ENCODE measurements at regions of chr21 and their contacts with region 1.

Region 1: GRCh38 chr21:42784276-42784675 is 95.1 kb downstream of the WDR4 start:
- DNase-seq: no peak
- H3K4me3 Mint-ChIP-seq: peak overlapping the region; percentile 69
- H3K27ac Mint-ChIP-seq: peak overlapping the region; percentile 96
- H3K4me1 Mint-ChIP-seq: peaks cover 47% of the 10 kb centered on the region
- H3K27me3 Mint-ChIP-seq: peaks cover 32% of the 10 kb centered on the region

Region 2: DNA sequence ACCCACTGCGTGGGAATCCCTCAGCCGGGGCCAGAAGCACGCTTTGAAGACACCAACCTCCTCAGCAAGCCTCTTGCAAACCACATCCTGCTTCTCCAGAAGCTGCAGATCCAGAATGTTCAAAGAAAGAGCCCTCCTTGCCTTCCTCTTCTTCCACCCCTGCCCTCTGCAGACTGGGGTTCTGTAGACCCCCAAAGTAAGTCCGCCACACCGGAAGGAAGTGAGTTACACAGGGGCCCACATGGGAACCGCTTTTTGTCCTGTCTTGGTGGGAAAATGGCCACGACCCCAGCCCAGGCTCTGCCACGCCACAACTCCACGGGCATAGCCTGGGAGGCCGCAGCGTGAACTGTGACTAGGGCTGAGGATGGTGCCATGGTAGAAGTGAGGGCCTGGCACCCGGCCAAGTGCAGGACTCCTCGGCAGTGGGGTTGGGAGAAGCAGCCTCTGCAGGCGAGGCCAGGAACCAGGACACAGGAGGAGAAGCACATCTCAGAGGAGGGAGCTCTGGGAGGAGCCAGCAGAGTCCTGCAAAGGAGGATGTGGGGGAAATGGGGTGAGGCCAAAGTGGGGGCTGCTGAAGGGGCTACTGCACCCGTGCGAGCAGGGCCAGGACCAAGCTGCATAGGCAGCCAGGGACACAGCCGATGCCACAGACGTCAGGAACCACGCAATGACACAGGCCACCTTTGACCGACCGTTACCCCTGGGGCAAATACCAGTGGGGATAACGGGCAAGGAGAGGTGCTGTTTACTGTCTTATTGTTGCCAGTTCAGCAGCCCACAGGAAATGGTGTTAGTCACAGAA is 100.0 kb before region 1 on chr21:
- CTCF ChIA-PET with region 1: no interaction called
- POLR2A ChIA-PET with region 1: interaction called, 12 read pairs
- DNase-seq: peak; percentile 71
- H3K4me3 Mint-ChIP-seq: peak overlapping the region; percentile 79
- H3K27ac Mint-ChIP-seq: peak overlapping the region; percentile 100
- H3K4me1 Mint-ChIP-seq: peaks cover 63% of the 10 kb centered on the region
- H3K27me3 Mint-ChIP-seq: peaks cover 5% of the 10 kb centered on the region

Region 3: GRCh38 chr21:42746593-42747275 is 37.5 kb before region 1 on chr21:
- CTCF ChIA-PET with region 1: no interaction called
- POLR2A ChIA-PET with region 1: interaction called, 11 read pairs
- DNase-seq: peak; percentile 61
- H3K4me3 Mint-ChIP-seq: peak overlapping the region; percentile 1
- H3K27ac Mint-ChIP-seq: peak overlapping the region; percentile 74
- H3K4me1 Mint-ChIP-seq: peaks cover 26% of the 10 kb centered on the region
- H3K27me3 Mint-ChIP-seq: peaks cover under 1% of the 10 kb centered on the region

Measured in activated CD4-positive, alpha-beta memory T cell treated with anti-CD3 and anti-CD28 coated beads, Interleukin-2, amount 10 ng/mL, durations not matched to agents 7 days and 5 days (primary cell).